IMR-90 (cell line): ENCODE measurements at regions of chr12 and their contacts with region 1.

Region 1: GRCh38 chr12:109477185-109477962 is at the starts of genes KCTD10 and UBE3B:
- DNase-seq: peak; percentile 89
- ATAC-seq: peak; percentile 91
- H3K4me3 ChIP-seq: peak within 1 kb of the TSS; percentile 90
- H3K27ac ChIP-seq: peak within 1 kb of the TSS; percentile 98
- H3K4me1 ChIP-seq: peaks cover 8% of the 10 kb centered on the region
- H3K27me3 ChIP-seq: no peaks in the 10 kb centered on the region
- CTCF ChIP-seq: no peak
- POLR2A ChIP-seq: peak; percentile 88
- RAD21 ChIP-seq: peak; percentile 29; the same call in 1 of the 2 replicates
- total RNA-seq, gene KCTD10: 72.1 and 77.2 TPM in 2 replicates
- total RNA-seq, gene UBE3B: 18.8 and 19.4 TPM in 2 replicates

Region 2: GRCh38 chr12:109462710-109463692 is 14.4 kb before region 1 on chr12:
- CTCF ChIA-PET with region 1: no interaction called
- POLR2A ChIA-PET with region 1: interaction called, 7 read pairs
- dilution Hi-C with region 1: no loop called
- in situ Hi-C with region 1: no loop called
- intact Hi-C with region 1: loop called (anchors 2 kb)
- DNase-seq: peak; percentile 98
- ATAC-seq: peak; percentile 47
- H3K4me3 ChIP-seq: peak overlapping the region; percentile 9; the same call in 1 of the 2 replicates
- H3K27ac ChIP-seq: peak overlapping the region; percentile 99
- H3K4me1 ChIP-seq: peaks cover 51% of the 10 kb centered on the region
- H3K27me3 ChIP-seq: no peaks in the 10 kb centered on the region
- CTCF ChIP-seq: no peak
- POLR2A ChIP-seq: peak; percentile 84
- RAD21 ChIP-seq: no peak